ENCODE measurements at regions of chr11 and their contacts with region 1.

Region 1: GRCh38 chr11:83071567-83072349 is at the start of gene RAB30:
- DNase-seq: peak; percentile 98
- H3K4me3 Mint-ChIP-seq: no peak within 1 kb of the TSS
- H3K27ac Mint-ChIP-seq: no peak within 1 kb of the TSS
- H3K4me1 Mint-ChIP-seq: peaks cover 32% of the 10 kb centered on the region
- H3K27me3 Mint-ChIP-seq: no peaks in the 10 kb centered on the region
- total RNA-seq, gene RAB30: 13.6 and 15.4 TPM in 2 replicates

Region 2: GRCh38 chr11:82927254-82927880 is 144.4 kb before region 1 on chr11:
- intact Hi-C with region 1: loop called (anchors 2 kb)
- DNase-seq: peak; percentile 78
- H3K4me3 Mint-ChIP-seq: no peak overlapping the region
- H3K27ac Mint-ChIP-seq: no peak overlapping the region
- H3K4me1 Mint-ChIP-seq: peaks cover 15% of the 10 kb centered on the region
- H3K27me3 Mint-ChIP-seq: no peaks in the 10 kb centered on the region

Region 3: DNA sequence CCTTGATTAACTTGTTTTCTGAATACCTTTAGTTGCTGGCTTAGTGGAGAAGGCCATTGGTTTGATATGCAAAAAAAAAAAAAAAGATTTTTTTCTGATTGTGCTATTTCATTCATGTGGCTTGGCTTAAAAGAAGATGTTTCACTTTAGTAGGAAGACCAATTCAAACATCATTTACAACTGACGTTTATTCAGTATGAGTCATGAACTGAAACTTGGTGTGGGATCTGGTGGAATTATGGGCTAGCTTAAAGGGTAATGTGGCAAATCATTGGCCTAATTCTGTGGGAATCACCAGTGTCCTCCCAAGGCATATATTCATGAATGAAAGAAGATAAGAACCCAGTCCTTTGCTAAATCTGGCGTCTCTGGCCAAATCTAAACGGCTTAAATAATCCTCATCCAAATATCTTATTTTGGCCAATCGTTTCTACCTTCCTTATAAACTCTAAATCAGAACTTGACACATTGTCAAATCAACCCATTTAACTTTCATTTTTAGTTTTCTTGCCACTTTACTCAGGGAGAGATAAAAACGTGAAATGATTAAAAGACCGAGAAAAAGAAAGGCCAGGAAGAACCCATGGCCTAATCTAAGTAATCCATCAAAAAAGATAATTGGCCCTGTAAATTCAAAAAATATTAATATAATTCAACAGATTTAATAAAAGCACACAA is 93.2 kb before region 1 on chr11:
- intact Hi-C with region 1: loop called (anchors 1 kb)
- DNase-seq: peak; percentile 66
- H3K4me3 Mint-ChIP-seq: peak overlapping the region; percentile 30
- H3K27ac Mint-ChIP-seq: peak overlapping the region; percentile 25
- H3K4me1 Mint-ChIP-seq: peaks cover 27% of the 10 kb centered on the region
- H3K27me3 Mint-ChIP-seq: peaks cover 7% of the 10 kb centered on the region

Region 4: GRCh38 chr11:82996966-82997606 is 74.7 kb before region 1 on chr11:
- intact Hi-C with region 1: loop called (anchors 1 kb)
- DNase-seq: no peak
- H3K4me3 Mint-ChIP-seq: no peak overlapping the region
- H3K27ac Mint-ChIP-seq: peak overlapping the region; percentile 35
- H3K4me1 Mint-ChIP-seq: peaks cover 35% of the 10 kb centered on the region
- H3K27me3 Mint-ChIP-seq: no peaks in the 10 kb centered on the region

Region 5: DNA sequence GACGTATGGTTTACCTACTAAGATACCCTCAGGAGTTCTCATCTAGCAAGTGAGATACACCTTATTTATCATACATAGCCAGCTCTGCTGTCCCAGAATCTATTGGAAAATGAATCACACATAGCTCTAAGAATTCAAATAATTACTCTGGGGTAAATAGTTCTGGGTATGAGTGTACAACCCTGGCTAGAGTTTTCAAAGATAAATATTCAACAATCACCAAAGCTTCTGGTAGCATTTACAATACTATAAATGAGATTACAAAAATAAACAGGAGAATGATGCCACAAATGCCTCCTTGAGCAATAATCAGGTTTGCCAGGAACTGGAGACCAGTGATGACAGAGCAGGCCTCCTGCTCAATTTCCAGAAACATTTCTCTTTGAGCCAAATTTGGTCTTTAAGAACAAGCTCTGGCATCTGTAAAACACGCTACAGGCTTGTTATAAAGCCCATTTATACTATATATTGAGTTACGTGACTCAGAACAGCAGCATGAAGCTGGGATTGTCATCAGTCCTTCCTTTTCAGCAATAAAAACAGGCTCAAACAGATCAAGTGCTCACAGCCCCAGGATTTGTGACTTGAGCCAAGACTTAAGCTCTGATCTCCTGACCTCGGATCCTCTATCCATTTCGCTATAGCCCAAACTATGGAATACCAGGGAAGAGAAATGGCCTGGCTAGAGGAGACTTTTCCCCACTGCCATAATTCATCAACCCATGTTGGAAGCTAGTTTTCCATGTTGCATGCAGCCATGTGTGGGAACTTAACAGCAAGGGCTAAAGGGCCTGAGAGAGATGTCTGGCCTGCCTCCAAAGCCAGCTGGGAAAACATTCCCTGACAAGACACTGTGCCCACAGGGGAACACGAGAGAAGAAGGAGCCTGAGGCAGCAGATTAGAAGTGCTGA is 19.7 kb before region 1 on chr11:
- intact Hi-C with region 1: loop called (anchors 2 kb)
- DNase-seq: no peak
- H3K4me3 Mint-ChIP-seq: no peak overlapping the region
- H3K27ac Mint-ChIP-seq: peak overlapping the region; percentile 16
- H3K4me1 Mint-ChIP-seq: peaks cover 44% of the 10 kb centered on the region
- H3K27me3 Mint-ChIP-seq: no peaks in the 10 kb centered on the region

Region 6: DNA sequence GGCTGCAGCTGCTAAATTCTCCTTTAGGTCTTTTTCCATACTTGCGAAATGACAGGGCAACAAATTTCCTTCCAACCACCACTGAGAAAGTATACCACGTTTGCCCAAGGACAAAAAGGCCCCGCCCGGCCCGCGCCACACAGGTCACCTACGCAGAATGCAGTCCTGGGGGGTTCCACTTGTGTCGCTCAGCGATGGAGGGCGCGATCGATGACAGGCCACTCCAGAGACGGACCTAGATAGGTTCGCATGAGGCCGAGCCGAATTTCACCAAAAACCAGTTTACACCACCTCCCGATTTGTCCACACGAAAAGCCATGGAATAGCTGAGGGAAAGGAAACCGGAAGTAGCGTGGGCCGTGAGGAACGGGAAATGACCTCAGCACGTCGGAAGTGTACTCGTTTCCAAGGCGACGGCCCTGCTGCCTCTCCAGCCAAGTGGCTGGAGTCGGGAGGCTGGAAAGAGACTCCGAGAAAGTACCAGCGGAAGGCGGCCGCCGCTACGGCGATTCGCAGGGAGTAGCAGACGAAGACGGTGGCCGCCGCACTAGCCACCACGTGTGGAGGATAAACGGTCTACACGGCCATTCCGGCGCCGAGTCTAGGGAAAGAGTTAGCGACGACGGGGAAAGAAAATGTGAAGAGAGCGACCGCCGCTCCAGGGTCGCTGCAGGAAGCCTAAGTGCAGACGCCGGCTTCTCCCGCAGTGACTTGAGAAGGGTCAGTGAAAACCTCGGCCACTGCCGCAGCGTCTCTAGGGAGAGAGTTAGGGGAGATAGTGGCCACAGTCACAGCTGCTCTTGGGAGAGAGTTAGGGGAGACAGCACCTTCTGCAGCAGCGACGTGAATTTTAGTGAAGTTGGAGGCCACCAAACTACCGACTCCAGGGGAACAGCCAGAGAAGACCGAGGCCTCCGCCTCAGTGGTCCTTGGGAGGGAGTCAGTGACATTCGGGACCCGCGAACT is 121.8 kb after region 1 on chr11 and contains the start of gene ANKRD42:
- intact Hi-C with region 1: loop called (anchors 1 kb)
- DNase-seq: peak; percentile 96
- H3K4me3 Mint-ChIP-seq: peak within 1 kb of the TSS; percentile 95
- H3K27ac Mint-ChIP-seq: peak within 1 kb of the TSS; percentile 90
- H3K4me1 Mint-ChIP-seq: peaks cover 33% of the 10 kb centered on the region
- H3K27me3 Mint-ChIP-seq: no peaks in the 10 kb centered on the region
- total RNA-seq, gene ANKRD42: 4.0 and 4.1 TPM in 2 replicates

Region 7: GRCh38 chr11:83285771-83286528 is 214.2 kb after region 1 on chr11 and contains the start of gene CCDC90B:
- intact Hi-C with region 1: loop called (anchors 1 kb)
- DNase-seq: peak; percentile 97
- H3K4me3 Mint-ChIP-seq: peak within 1 kb of the TSS; percentile 99
- H3K27ac Mint-ChIP-seq: peak within 1 kb of the TSS; percentile 99
- H3K4me1 Mint-ChIP-seq: peaks cover 20% of the 10 kb centered on the region
- H3K27me3 Mint-ChIP-seq: peaks cover 11% of the 10 kb centered on the region
- total RNA-seq, gene CCDC90B: 24.1 and 24.7 TPM in 2 replicates

Region 8: DNA sequence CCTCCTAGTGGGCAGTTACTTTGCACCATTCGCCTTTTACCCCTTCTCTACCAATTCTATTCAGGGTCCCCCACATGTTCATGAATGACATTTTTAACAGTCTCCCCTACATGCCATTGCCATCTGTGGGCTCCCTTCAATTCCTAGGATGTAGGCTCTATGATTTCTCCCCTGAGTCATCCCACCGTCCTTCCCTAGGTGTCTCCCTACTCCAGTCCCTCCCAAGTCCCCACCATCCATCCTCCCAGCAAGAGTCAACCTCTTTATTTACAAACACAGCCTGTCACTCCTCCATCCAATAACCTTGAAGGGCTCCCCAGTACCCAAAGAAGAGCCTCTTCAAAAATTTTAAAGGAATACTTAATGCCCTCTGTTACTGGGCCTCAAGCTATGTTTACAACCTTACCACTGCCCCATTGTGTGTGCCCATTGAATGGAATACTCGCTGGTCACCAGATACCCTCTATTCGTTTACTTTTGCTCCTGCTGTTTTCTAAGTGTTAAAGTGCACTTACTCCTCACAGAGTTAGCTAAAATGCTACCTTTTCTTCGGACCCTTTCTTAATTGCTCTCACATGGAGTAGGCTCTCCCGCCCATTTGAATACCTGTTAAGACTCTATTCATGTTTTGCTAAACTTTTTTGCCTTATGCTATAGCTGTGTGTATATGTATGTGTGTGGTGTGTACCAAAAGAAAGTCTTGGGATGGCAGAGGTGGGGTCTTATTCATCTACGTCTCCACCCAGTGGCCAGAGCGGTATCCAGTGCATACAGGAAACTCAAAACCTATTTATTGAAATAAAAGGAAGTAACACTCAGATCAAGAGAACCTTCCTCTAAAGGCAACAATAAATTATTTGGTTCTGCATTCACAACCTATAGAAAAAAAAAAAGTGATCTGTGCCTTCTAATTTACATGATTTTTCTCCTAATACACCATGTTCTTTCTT is 450.2 kb after region 1 on chr11:
- intact Hi-C with region 1: no loop called
- DNase-seq: no peak
- H3K4me3 Mint-ChIP-seq: no peak overlapping the region
- H3K27ac Mint-ChIP-seq: no peak overlapping the region
- H3K4me1 Mint-ChIP-seq: no peaks in the 10 kb centered on the region
- H3K27me3 Mint-ChIP-seq: peaks cover 2% of the 10 kb centered on the region

Measured in activated CD4-positive, alpha-beta T cell treated with anti-CD3 and anti-CD28 coated beads, Interleukin-2, amount 10 ng/mL, durations not matched to agents 24 days and 14 days (primary cell).